ENCODE measurements at regions of chr22 and their contacts with region 1.

Region 1: GRCh38 chr22:31728857-31729256 is 21.1 kb downstream of the PRR14L start:
- DNase-seq: no peak
- H3K4me3 ChIP-seq: no peak overlapping the region
- H3K27ac ChIP-seq: no peak overlapping the region
- H3K4me1 ChIP-seq: no peaks in the 10 kb centered on the region
- H3K27me3 ChIP-seq: no peaks in the 10 kb centered on the region
- CTCF ChIP-seq: no peak

Region 2: GRCh38 chr22:31715147-31715778 is 13.6 kb before region 1 on chr22:
- CTCF ChIA-PET with region 1: no interaction called
- POLR2A ChIA-PET with region 1: interaction called, 10 read pairs
- intact Hi-C with region 1: no loop called
- DNase-seq: no peak
- H3K4me3 ChIP-seq: no peak overlapping the region
- H3K27ac ChIP-seq: no peak overlapping the region
- H3K4me1 ChIP-seq: no peaks in the 10 kb centered on the region
- H3K27me3 ChIP-seq: no peaks in the 10 kb centered on the region
- CTCF ChIP-seq: no peak

Region 3: DNA sequence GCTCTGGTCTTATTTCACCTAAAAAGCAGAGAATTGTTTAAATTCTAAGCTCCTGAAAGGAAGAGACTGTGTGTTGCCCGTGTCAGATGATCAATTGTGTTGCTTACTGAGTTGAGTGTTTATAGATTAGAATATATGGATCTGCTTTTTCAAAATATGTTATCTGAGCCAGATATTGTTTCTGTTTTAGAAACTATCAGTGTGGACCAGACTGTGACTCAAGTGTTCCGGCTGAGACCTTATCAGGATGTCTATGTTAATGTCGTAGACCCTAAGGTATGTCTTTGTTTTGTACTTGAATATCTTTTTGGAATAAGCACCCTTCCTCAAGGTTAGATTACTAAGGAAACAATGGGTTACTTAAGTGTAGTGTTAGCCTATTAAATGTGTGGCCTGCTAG is 35.9 kb after region 1 on chr22:
- CTCF ChIA-PET with region 1: no interaction called
- POLR2A ChIA-PET with region 1: no interaction called
- intact Hi-C with region 1: no loop called
- DNase-seq: no peak
- H3K4me3 ChIP-seq: no peak overlapping the region
- H3K27ac ChIP-seq: no peak overlapping the region
- H3K4me1 ChIP-seq: no peaks in the 10 kb centered on the region
- H3K27me3 ChIP-seq: no peaks in the 10 kb centered on the region
- CTCF ChIP-seq: no peak

Region 4: DNA sequence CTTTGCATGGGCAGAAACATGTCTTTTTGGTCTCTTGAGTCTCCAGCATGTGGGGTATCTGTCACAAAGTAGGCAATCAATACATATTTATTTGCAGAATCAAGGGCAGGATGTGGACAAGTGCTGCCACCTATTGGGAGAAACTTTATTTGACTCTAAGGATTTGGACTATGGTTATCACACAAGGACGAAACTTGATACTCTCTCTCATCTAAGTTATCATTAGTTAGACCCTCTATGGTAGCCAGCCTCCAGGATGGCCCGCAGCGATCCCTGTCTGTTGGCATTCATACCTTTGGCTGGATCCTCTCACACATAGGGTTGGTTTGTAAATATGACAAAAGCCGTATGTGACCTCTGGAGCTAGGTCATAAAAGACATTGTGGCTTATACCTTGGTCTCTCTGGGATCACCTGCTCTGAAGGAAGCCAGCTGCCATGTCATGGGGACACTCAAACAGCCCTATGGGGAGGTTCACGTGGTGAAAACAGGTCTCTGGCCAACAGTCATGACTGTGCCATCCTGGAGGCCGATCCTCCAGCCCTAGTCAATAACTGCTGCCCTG is 744.6 kb after region 1 on chr22:
- CTCF ChIA-PET with region 1: no interaction called
- POLR2A ChIA-PET with region 1: no interaction called
- intact Hi-C with region 1: no loop called
- DNase-seq: peak; percentile 82
- H3K4me3 ChIP-seq: peak overlapping the region; percentile 96
- H3K27ac ChIP-seq: no peak overlapping the region
- H3K4me1 ChIP-seq: peaks cover 18% of the 10 kb centered on the region
- H3K27me3 ChIP-seq: no peaks in the 10 kb centered on the region
- CTCF ChIP-seq: peak; percentile 72